Activated T-helper 1 cell treated with anti-CD3 and anti-CD28 coated beads, Interleukin-12 subunit alpha, Interleukin-12 subunit beta, Interleukin-2, Interleukin-4 antibody, amounts not matched to agents 30 ng/mL and 10 ng/mL and 1 ng/mL, durations not matched to agents 14 hours and 24 hours and 36 hours (primary cell): ENCODE measurements at regions of chr9 and their contacts with region 1.

Region 1: DNA sequence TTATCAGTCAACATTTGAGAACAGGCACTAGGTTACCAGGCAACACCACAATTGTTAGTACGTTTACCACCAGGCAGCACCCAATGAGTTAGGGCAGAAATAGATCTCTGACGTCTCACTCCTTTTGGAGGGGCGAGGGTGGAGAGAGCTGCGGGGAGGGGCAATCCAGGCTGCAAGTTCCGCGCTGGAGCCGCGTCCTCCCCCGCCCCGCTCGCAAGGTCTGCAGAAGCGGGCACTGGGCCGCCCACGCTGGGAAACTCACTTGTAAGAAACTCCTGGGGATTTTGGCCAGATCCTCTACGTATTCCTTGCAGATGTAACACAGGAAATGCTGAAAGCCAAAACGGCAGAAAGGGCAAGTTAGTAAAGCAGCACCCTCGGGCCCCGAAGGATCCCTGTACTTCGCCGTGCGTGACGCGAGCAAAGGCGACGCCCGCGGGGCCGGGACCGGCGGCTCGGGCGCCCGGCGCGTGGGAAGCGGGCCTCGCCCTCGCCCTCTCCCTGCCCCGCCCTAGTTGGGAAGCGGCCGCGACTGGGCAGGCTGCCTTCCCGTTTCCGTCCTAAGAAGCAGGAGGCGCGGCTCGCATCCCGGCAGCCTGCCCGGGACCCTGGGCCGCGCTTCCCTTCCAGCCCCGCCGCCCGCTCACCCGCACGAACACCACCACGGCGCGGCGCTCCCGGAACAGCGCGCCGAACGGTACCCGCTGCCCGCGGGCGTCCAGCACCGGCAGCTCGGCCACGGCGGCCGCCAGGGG is 497 bp downstream of the PRXL2C start:
- DNase-seq: peak; percentile 50
- H3K4me3 Mint-ChIP-seq: peak overlapping the region; percentile 88
- H3K27ac Mint-ChIP-seq: peak overlapping the region; percentile 72
- H3K4me1 Mint-ChIP-seq: peaks cover 11% of the 10 kb centered on the region
- H3K27me3 Mint-ChIP-seq: peaks cover 6% of the 10 kb centered on the region

Region 2: GRCh38 chr9:96327694-96328352 is 326.8 kb before region 1 on chr9:
- intact Hi-C with region 1: loop called (anchors 1 kb)
- DNase-seq: peak; percentile 6
- H3K4me3 Mint-ChIP-seq: no peak overlapping the region
- H3K27ac Mint-ChIP-seq: no peak overlapping the region
- H3K4me1 Mint-ChIP-seq: no peaks in the 10 kb centered on the region
- H3K27me3 Mint-ChIP-seq: peaks cover 5% of the 10 kb centered on the region

Region 3: GRCh38 chr9:96449845-96450612 is 204.6 kb before region 1 on chr9 and contains the start of gene HABP4:
- intact Hi-C with region 1: loop called (anchors 1 kb)
- DNase-seq: peak; percentile 94
- H3K4me3 Mint-ChIP-seq: peak within 1 kb of the TSS; percentile 87
- H3K27ac Mint-ChIP-seq: peak within 1 kb of the TSS; percentile 55
- H3K4me1 Mint-ChIP-seq: peaks cover 23% of the 10 kb centered on the region
- H3K27me3 Mint-ChIP-seq: peaks cover 29% of the 10 kb centered on the region
- total RNA-seq, gene HABP4: 10.8 and 11.1 TPM in 2 replicates

Region 4: GRCh38 chr9:96619491-96620154 is 35.0 kb before region 1 on chr9 and contains the start of gene CDC14B:
- intact Hi-C with region 1: loop called (anchors 2 kb)
- DNase-seq: peak; percentile 54
- H3K4me3 Mint-ChIP-seq: peak within 1 kb of the TSS; percentile 71
- H3K27ac Mint-ChIP-seq: no peak within 1 kb of the TSS
- H3K4me1 Mint-ChIP-seq: peaks cover 12% of the 10 kb centered on the region
- H3K27me3 Mint-ChIP-seq: peaks cover 40% of the 10 kb centered on the region
- total RNA-seq, gene CDC14B: 1.1 and 1.4 TPM in 2 replicates